ENCODE measurements at regions of chr19 and their contacts with region 1.

Region 1: DNA sequence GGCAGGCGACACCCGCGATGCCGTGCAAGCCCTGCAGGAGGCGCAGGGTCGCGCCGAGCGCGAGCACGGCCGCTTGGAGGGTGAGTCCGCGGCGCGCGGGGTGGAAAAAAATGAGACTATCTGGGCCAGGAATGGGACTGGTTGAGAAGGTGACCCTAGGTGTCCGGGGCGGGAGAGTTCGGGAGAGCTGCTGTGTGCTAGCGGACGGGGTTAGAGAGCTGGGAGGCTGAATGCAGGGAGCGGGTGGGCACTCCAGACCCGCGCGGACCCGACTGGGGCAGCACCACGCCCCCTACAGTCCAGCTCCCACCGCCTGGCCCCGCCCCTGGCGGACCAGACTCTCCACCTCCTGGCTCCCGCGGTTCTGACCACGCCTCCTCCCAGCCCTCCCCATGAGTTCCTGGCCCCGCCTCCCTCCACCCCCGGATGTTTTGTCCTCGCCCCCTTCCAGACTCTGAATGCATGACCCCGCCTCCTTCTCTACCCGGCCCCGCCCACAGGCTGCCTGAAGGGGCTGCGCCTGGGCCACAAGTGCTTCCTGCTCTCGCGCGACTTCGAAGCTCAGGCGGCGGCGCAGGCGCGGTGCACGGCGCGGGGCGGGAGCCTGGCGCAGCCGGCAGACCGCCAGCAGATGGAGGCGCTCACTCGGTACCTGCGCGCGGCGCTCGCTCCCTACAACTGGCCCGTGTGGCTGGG is 1.5 kb downstream of the CLEC11A start:
- DNase-seq: peak; percentile 99 to 100
- ATAC-seq: peak; percentile 66 to 89
- H3K4me3 ChIP-seq: peak overlapping the region; percentile 73
- H3K27ac ChIP-seq: peak overlapping the region; percentile 86 to 92
- H3K4me1 ChIP-seq: peaks cover 14% of the 10 kb centered on the region
- CTCF ChIP-seq: peak; percentile 95
- EP300 ChIP-seq: no peak
- POLR2A ChIP-seq: peak; percentile 99
- RAD21 ChIP-seq: peak; percentile 47 to 57; a peak in 3 of 5 replicates

Region 2: DNA sequence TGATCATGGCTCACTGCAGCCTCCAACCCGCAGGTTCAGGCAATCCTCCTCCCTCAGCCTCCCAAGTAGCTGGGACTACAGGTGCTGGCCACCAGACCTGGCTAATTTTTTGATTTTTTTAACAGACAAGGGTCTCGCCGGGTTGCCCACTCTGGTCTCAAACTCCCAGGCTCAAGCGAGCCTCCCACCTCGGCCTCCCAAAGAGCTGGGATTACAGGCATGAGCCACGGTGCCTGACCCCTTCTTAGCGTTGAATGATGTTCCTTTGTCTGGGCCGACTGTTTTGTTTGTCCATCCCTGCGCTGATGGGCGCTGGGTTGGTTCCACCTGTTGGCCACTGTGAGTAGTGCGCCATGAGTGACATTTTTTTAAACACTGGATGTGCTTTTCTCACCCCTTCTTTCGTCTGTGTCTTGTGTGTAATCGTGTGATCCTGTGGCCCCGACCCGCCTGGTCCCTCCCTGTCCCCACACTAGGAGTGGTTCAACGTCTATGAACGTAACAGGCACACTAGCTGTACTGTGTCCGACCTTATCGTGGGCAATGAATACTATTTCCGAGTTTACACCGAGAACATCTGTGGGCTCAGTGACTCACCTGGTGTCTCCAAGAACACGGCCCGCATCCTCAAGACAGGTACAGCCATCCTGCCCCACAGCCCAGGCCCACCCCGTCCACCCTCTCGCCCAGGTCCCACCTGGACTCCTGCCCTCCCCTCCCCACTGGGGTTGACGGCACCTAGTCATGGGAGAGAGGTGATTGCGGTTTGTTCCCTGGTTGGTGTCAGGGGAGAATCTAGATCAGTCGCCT is 263.4 kb before region 1 on chr19:
- CTCF ChIA-PET with region 1: no interaction called
- POLR2A ChIA-PET with region 1: no interaction called
- DNase-seq: peak; percentile 87 to 99
- ATAC-seq: peak; percentile 80 to 87
- H3K4me3 ChIP-seq: no peak overlapping the region
- H3K27ac ChIP-seq: peak overlapping the region; percentile 41 to 74
- H3K4me1 ChIP-seq: peaks cover 16% of the 10 kb centered on the region
- CTCF ChIP-seq: peak; percentile 88
- EP300 ChIP-seq: no peak
- POLR2A ChIP-seq: no peak
- RAD21 ChIP-seq: peak; percentile 85 to 92

Region 3: GRCh38 chr19:50537762-50538230 is 186.9 kb before region 1 on chr19:
- CTCF ChIA-PET with region 1: interaction called, 14 read pairs
- POLR2A ChIA-PET with region 1: no interaction called
- DNase-seq: peak; percentile 95 to 98
- ATAC-seq: peak; percentile 90 to 98
- H3K4me3 ChIP-seq: no peak overlapping the region
- H3K27ac ChIP-seq: no peak overlapping the region
- H3K4me1 ChIP-seq: no peaks in the 10 kb centered on the region
- CTCF ChIP-seq: peak; percentile 98
- EP300 ChIP-seq: no peak
- POLR2A ChIP-seq: no peak
- RAD21 ChIP-seq: peak; percentile 87

Region 4: GRCh38 chr19:50669302-50670101 is 55.2 kb before region 1 on chr19:
- CTCF ChIA-PET with region 1: interaction called, 25 read pairs
- POLR2A ChIA-PET with region 1: interaction called, 6 read pairs
- DNase-seq: peak; percentile 61 to 69
- ATAC-seq: peak; percentile 48 to 63; a peak in 5 of 6 replicates
- H3K4me3 ChIP-seq: no peak overlapping the region; the same call in 2 of the 3 replicates
- H3K27ac ChIP-seq: no peak overlapping the region
- H3K4me1 ChIP-seq: peaks cover 23% of the 10 kb centered on the region
- CTCF ChIP-seq: peak; percentile 91
- EP300 ChIP-seq: no peak
- POLR2A ChIP-seq: no peak
- RAD21 ChIP-seq: peak; percentile 53 to 65

Region 5: DNA sequence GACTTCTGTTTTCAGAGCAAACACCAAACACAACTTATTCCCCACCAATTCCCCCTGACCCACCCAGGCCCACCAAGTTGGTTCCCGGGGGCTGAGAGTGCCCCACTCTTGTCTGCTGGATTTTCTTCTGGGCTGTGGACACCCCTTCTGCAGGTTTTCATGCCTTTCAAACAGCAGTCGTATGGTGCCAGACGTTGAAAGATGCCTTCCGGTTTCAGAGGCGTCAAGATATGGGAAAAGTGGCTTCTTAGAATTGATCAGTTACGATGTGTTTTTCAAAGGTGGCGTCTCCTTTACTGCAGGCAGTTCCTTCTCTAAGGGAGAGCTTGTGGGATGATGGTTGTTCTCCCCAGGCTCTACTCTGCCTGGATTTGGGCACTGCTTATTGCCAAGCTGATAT is 11.2 kb after region 1 on chr19:
- CTCF ChIA-PET with region 1: interaction called, 47 read pairs
- POLR2A ChIA-PET with region 1: interaction called, 34 read pairs
- DNase-seq: no peak
- ATAC-seq: no peak
- H3K4me3 ChIP-seq: no peak overlapping the region
- H3K27ac ChIP-seq: no peak overlapping the region
- H3K4me1 ChIP-seq: no peaks in the 10 kb centered on the region
- CTCF ChIP-seq: no peak
- EP300 ChIP-seq: no peak
- POLR2A ChIP-seq: no peak
- RAD21 ChIP-seq: no peak

Region 6: DNA sequence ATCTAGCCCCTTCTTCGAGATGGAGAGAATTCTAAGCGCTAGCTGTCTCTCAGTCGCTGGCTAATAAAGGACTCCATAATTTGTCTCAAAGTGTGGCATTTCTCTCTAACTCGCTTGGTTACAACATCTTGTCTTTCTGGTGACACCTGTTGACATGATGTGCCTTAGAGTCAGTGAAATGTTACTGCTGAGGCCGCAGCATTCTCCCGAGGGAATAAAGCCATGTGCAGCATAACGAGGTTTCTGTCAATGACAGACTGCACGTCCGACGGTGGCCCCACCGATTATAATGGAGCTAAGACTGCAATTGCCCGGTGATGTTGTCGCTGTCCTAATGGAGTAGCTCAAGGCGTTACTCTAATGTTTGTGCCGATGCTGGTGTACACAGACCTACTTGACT is 25.3 kb after region 1 on chr19:
- CTCF ChIA-PET with region 1: interaction called, 25 read pairs
- POLR2A ChIA-PET with region 1: interaction called, 5 read pairs
- DNase-seq: no peak
- ATAC-seq: no peak
- H3K4me3 ChIP-seq: no peak overlapping the region
- H3K27ac ChIP-seq: no peak overlapping the region
- H3K4me1 ChIP-seq: peaks cover 6% of the 10 kb centered on the region; the same call in 1 of the 3 replicates
- CTCF ChIP-seq: no peak
- EP300 ChIP-seq: no peak
- POLR2A ChIP-seq: no peak
- RAD21 ChIP-seq: no peak

Region 7: DNA sequence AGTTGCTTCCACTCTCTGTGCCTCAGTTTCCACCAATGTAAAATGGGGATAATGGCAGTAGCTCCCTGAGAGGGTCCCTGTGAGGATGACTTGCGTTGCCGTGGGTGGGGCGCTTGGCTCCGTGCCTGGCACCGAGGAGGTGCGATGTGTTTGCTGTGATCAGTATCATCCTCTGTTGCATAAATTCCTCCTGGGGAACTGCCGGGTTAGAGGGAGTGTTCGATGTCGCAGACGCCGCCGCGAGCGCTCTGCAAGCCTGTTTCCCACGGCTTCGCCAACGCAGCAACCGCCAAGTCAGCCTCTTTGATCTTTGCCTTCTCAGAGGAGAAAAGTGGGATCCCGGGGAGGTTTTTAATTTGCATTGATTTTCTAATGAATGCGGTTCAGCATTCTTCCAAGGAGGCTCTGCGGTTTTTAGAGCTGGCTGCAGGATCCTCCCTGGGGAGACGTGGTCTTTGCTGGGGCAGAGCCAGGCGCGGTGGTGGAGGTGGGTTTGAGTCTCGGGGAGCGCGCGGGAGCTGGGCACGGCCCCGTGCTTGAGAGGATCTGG is 53.2 kb after region 1 on chr19:
- CTCF ChIA-PET with region 1: interaction called, 272 read pairs
- POLR2A ChIA-PET with region 1: interaction called, 25 read pairs
- DNase-seq: peak in 1 of 2 experiments; percentile 71
- ATAC-seq: peak; percentile 36 to 62; a peak in 5 of 6 replicates
- H3K4me3 ChIP-seq: peak overlapping the region; percentile 29; the same call in 2 of the 3 replicates
- H3K27ac ChIP-seq: no peak overlapping the region
- H3K4me1 ChIP-seq: peaks cover 14% of the 10 kb centered on the region; the same call in 1 of the 3 replicates
- CTCF ChIP-seq: no peak
- EP300 ChIP-seq: no peak
- POLR2A ChIP-seq: no peak
- RAD21 ChIP-seq: no peak

Region 8: DNA sequence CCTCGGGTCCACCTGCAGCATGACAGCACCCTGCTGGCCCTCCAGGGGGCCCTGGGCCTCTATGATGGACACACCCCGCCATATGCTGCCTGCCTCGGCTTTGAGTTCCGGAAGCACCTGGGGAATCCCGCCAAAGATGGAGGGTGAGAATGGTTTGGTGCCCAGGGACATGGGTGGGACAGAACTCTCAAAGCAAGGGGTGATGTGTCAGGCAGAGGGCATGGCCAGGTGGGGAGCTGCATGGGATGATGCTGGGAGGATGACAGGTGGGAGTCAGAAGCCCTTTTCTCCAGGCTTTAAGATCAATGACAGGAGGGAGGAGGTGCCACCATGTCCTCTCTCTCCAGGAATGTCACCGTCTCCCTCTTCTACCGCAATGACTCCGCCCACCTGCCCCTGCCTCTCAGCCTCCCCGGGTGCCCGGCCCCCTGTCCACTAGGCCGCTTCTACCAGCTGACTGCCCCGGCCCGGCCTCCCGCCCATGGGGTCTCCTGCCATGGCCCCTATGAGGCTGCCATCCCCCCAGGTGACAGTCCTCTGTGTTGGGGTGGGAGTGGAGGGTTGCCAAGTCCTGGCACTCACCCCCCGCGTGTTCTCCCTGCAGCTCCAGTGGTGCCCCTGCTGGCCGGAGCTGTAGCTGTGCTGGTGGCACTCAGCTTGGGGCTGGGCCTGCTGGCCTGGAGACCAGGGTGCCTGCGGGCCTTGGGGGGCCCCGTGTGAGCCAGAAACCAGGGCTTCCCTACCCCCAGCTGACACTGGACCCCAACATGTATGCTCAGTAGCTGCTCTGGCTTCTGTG is 70.0 kb after region 1 on chr19:
- CTCF ChIA-PET with region 1: interaction called, 10 read pairs
- POLR2A ChIA-PET with region 1: interaction called, 4 read pairs
- DNase-seq: peak; percentile 67 to 76
- ATAC-seq: peak; percentile 31 to 62
- H3K4me3 ChIP-seq: no peak overlapping the region
- H3K27ac ChIP-seq: no peak overlapping the region
- H3K4me1 ChIP-seq: peaks cover 9% of the 10 kb centered on the region; the same call in 2 of the 3 replicates
- CTCF ChIP-seq: no peak; the same call in 2 of the 3 replicates
- EP300 ChIP-seq: no peak
- POLR2A ChIP-seq: peak; percentile 42
- RAD21 ChIP-seq: no peak